Gastrocnemius medialis (tissue), 4 donors: ENCODE measurements at regions of chr7 and their contacts with region 1.

Region 1: DNA sequence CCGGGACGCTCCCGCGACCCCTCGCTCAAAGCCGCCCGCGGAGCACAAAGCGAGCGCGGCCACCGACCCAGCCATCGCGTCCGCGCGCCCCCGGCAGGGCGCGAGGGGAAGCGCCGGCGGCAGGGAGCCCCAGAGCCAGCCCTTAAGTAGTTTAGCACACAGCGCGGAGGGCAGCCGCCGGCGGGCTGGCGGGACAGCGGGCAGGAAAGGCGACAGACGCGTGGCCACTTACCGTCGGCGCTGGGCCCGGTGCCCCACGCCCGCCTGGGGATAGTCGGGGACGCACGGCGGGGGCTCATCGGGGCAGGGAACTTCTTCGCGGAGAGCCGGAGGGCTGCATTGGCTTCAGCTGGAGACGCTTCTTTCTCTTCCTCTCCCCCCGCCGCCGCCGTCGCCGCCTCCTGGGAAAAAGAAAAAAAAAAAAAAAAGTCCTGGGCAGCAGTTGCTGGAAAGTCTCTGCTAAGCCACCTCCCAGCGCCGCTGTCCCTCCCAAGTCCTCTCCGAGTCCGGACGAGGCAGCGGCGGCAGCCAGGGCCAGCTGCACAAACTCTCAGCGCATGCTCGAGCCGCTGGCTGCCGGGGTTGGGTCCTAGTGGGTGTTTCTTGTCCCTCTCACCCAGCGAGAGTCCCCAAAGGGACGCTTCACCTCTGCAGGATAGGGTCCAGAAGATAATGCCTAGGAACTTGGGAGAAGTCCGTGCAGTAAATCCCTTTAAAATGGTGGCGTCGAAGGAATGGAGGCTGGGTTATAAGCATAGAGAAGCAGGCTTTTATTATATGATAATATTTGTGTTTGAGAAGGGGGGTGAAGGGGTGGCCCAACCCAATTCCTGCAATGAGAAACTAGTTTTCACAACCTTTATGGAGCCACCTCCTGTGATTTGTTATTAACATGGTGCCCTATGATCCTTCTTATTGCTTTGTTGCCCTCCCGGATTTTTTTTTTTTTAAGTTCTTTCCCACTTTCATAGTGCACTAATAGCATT is at the start of gene TSPAN12:
- DNase-seq: peak; percentile 37 to 61
- ATAC-seq: peak; percentile 85 to 90
- H3K4me3 ChIP-seq: peak within 1 kb of the TSS; percentile 66 to 92 (median 82)
- H3K27ac ChIP-seq: peak within 1 kb of the TSS; percentile 74 to 85 (median 82)
- H3K4me1 ChIP-seq: peaks cover 7 to 13% of the 10 kb centered on the region in 2 donors
- H3K27me3 ChIP-seq: no peaks in the 10 kb centered on the region
- CTCF ChIP-seq: peak; percentile 38 to 68 (median 62)
- POLR2A ChIP-seq: peak in 1 of 2 donors; percentile 28
- total RNA-seq, gene TSPAN12: 1.3 to 6.3 (median 2.8) TPM

Region 2: GRCh38 chr7:120819863-120820262 is 38.0 kb before region 1 on chr7:
- in situ Hi-C with region 1: no loop called
- intact Hi-C with region 1: loop called (anchors 1 kb)
- DNase-seq: no peak
- ATAC-seq: no peak
- H3K4me3 ChIP-seq: no peak overlapping the region
- H3K27ac ChIP-seq: no peak overlapping the region
- H3K4me1 ChIP-seq: no peaks in the 10 kb centered on the region
- H3K27me3 ChIP-seq: no peaks in the 10 kb centered on the region
- CTCF ChIP-seq: no peak
- POLR2A ChIP-seq: no peak

Region 3: GRCh38 chr7:120941064-120941463 is 83.2 kb after region 1 on chr7:
- in situ Hi-C with region 1: no loop called
- intact Hi-C with region 1: loop called (anchors 2 kb)
- DNase-seq: no peak
- ATAC-seq: no peak
- H3K4me3 ChIP-seq: no peak overlapping the region
- H3K27ac ChIP-seq: peak overlapping the region in 2 of 4 donors; percentile 37 to 59
- H3K4me1 ChIP-seq: no peaks in the 10 kb centered on the region
- H3K27me3 ChIP-seq: no peaks in the 10 kb centered on the region
- CTCF ChIP-seq: peak in 3 of 5 experiments; percentile 21 to 31 (median 27)
- POLR2A ChIP-seq: no peak

Region 4: DNA sequence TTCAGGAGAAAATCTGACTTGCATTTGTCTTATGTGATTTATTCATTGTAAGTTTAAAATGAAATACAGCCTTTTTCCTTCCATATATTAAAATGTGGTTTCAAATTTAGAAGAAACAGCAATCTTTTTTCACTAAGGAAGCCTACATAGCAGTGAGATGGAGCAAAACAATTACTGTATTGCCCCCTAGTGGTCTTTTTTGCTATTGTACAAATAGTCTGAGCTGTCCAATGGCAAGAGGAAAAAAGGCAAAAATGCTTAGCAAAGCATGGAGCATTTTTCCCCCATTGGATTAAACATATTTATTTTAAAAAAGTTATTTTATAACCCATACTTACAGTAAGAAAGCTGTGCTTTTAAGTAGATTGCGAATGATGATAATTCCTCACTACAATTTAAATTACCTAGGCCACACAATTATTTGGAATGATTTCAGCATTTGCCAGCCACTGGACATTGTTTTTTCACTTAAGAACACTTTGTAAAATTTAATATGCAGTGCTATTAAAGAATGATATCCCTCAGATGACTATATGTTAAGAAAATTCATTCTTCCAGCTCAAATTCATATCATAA is 250.1 kb after region 1 on chr7:
- in situ Hi-C with region 1: no loop called
- intact Hi-C with region 1: loop called (anchors 1 kb)
- DNase-seq: no peak
- ATAC-seq: peak; percentile 79 to 82
- H3K4me3 ChIP-seq: no peak overlapping the region
- H3K27ac ChIP-seq: peak overlapping the region in 3 of 4 donors; percentile 12 to 47 (median 24)
- H3K4me1 ChIP-seq: peaks cover 14 to 22% of the 10 kb centered on the region in 2 donors
- H3K27me3 ChIP-seq: no peaks in the 10 kb centered on the region
- CTCF ChIP-seq: peak; percentile 69 to 76 (median 73)
- POLR2A ChIP-seq: no peak